GM13977 (cell line): ENCODE measurements at regions of chr7 and their contacts with region 1.

Region 1: DNA sequence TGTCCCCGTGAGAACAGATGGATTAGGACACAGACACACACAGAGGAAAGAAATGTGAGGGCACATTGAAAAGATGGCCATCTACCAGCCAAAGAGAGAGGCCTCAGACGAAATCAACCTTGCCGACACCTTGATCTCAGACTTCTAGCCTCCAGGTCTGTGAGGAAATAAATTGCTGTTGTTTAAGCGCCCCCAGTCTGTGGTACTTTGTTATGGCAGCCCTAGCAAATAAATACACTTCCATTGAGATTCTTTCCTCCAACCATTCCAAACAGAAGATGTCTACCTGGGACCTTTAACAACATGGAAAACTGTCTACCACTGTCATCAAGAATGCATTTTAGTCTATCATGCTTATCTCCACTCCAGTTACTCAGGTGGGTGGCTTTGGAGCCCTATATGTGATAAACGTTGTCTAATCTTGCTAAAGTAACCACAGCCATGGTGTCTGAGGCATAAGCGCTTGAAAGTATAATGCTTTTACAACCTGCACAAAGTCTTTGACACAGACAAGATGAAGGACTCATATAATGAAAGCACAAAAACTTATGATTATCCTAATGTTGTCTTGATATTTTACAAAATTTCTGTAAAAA is 244.3 kb downstream of the MTERF1 start:
- DNase-seq: no peak
- CTCF ChIP-seq: peak; percentile 69

Region 2: GRCh38 chr7:91089382-91089963 is 546.8 kb before region 1 on chr7:
- in situ Hi-C with region 1: loop called (anchors 25 kb)
- DNase-seq: peak; percentile 17
- CTCF ChIP-seq: peak; percentile 71

Region 3: DNA sequence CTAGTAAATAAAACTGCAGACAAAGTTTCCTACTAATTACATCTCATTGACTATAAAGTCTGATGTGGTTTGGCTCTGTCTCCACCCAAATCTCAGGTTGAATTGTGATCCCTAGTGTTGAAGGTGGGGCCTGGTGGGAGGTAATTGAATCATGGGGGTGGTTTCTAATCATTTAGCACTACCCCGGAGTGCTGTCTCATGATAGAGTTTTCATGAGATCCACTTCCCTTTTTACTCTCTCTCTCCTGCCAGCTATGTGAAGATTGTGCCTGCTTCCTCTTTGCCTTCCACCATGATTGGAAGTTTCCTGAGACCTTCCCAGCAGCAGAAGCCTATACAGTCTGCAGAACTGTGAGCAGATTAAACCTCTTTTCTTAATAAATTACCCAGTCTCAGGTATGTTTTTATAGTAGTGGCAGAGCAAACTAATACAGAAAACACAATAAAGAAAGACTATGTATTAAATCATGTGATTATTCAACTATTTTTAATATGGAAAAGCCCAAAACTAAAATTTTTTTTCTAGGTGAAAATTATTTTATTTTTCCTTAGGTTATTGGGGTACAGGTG is 139.9 kb before region 1 on chr7:
- in situ Hi-C with region 1: no loop called
- DNase-seq: no peak
- CTCF ChIP-seq: no peak

Region 4: GRCh38 chr7:92404170-92404614 is 768.0 kb after region 1 on chr7:
- in situ Hi-C with region 1: no loop called
- DNase-seq: no peak
- CTCF ChIP-seq: no peak